ENCODE measurements at regions of chr14 and their contacts with region 1.

Region 1: GRCh38 chr14:68816262-68816942 is 23.5 kb upstream of the ZFP36L1 start:
- DNase-seq: peak; percentile 84 to 88 (median 86)
- H3K4me3 ChIP-seq: peak overlapping the region; percentile 32 to 44
- H3K4me3 Mint-ChIP-seq: peak overlapping the region; percentile 82 to 93 (median 86)
- H3K27ac ChIP-seq: peak overlapping the region; percentile 81
- H3K27ac Mint-ChIP-seq: peak overlapping the region; percentile 95 to 98 (median 95)
- H3K4me1 ChIP-seq: peaks cover 88% of the 10 kb centered on the region
- H3K4me1 Mint-ChIP-seq: peaks cover 50 to 86% (median 67%) of the 10 kb centered on the region in 4 donors
- H3K27me3 ChIP-seq: no peaks in the 10 kb centered on the region
- H3K27me3 Mint-ChIP-seq: no peaks in the 10 kb centered on the region

Region 2: GRCh38 chr14:67883717-67884116 is 932.7 kb before region 1 on chr14:
- CTCF ChIA-PET with region 1: interaction called, 3 read pairs
- POLR2A ChIA-PET with region 1: interaction called, 3 read pairs
- intact Hi-C with region 1: loop called (anchors 5 kb)
- DNase-seq: peak in 3 of 5 donors; percentile 6 to 11 (median 6)
- H3K4me3 ChIP-seq: no peak overlapping the region
- H3K4me3 Mint-ChIP-seq: no peak overlapping the region
- H3K27ac ChIP-seq: no peak overlapping the region
- H3K27ac Mint-ChIP-seq: no peak overlapping the region
- H3K4me1 ChIP-seq: no peaks in the 10 kb centered on the region
- H3K4me1 Mint-ChIP-seq: peaks cover 0 to 13% (median 10%) of the 10 kb centered on the region in 4 donors
- H3K27me3 ChIP-seq: no peaks in the 10 kb centered on the region
- H3K27me3 Mint-ChIP-seq: no peaks in the 10 kb centered on the region

Region 3: GRCh38 chr14:68261092-68261842 is 555.1 kb before region 1 on chr14:
- CTCF ChIA-PET with region 1: interaction called, 428 read pairs
- POLR2A ChIA-PET with region 1: interaction called, 11 read pairs
- intact Hi-C with region 1: no loop called
- DNase-seq: no peak
- H3K4me3 ChIP-seq: peak overlapping the region in 1 of 2 donors; percentile 10
- H3K4me3 Mint-ChIP-seq: peak overlapping the region; percentile 46 to 82 (median 64)
- H3K27ac ChIP-seq: peak overlapping the region; percentile 37
- H3K27ac Mint-ChIP-seq: peak overlapping the region; percentile 87 to 96 (median 93)
- H3K4me1 ChIP-seq: peaks cover 49% of the 10 kb centered on the region
- H3K4me1 Mint-ChIP-seq: peaks cover 26 to 57% (median 46%) of the 10 kb centered on the region in 4 donors
- H3K27me3 ChIP-seq: no peaks in the 10 kb centered on the region
- H3K27me3 Mint-ChIP-seq: no peaks in the 10 kb centered on the region

Region 4: DNA sequence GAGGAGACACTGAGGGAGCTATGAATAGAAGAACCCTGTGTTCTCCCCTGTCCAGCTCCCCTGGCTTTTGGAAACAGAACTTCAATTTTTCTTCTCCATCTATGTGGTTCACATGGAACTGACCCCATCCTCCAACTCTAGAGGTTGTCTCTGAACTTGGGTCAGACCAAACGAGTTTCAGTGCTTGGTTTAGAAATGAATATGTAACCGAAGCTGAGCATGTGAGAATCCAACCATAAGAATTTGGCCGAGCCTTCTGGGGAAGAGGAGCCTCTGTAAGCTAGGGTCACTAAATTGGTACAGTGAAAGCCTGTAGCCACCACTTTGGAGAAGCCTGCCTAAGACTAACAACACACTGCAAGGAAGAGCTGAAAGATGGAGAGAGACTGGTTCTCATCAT is 487.9 kb before region 1 on chr14:
- CTCF ChIA-PET with region 1: no interaction called
- POLR2A ChIA-PET with region 1: no interaction called
- intact Hi-C with region 1: no loop called
- DNase-seq: no peak
- H3K4me3 ChIP-seq: no peak overlapping the region
- H3K4me3 Mint-ChIP-seq: no peak overlapping the region
- H3K27ac ChIP-seq: no peak overlapping the region
- H3K27ac Mint-ChIP-seq: no peak overlapping the region
- H3K4me1 ChIP-seq: no peaks in the 10 kb centered on the region
- H3K4me1 Mint-ChIP-seq: peaks cover 0 to 1% (median 0%) of the 10 kb centered on the region in 4 donors
- H3K27me3 ChIP-seq: no peaks in the 10 kb centered on the region
- H3K27me3 Mint-ChIP-seq: no peaks in the 10 kb centered on the region

Region 5: GRCh38 chr14:68408680-68409079 is 407.7 kb before region 1 on chr14:
- CTCF ChIA-PET with region 1: interaction called, 13 read pairs
- POLR2A ChIA-PET with region 1: interaction called, 5 read pairs
- intact Hi-C with region 1: no loop called
- DNase-seq: peak in 4 of 5 donors; percentile 7 to 28 (median 18)
- H3K4me3 ChIP-seq: no peak overlapping the region
- H3K4me3 Mint-ChIP-seq: peak overlapping the region in 2 of 8 donors; percentile 9 to 14
- H3K27ac ChIP-seq: no peak overlapping the region
- H3K27ac Mint-ChIP-seq: peak overlapping the region in 1 of 7 donors; percentile 10
- H3K4me1 ChIP-seq: peaks cover 26% of the 10 kb centered on the region
- H3K4me1 Mint-ChIP-seq: peaks cover 27 to 39% (median 31%) of the 10 kb centered on the region in 4 donors
- H3K27me3 ChIP-seq: no peaks in the 10 kb centered on the region
- H3K27me3 Mint-ChIP-seq: no peaks in the 10 kb centered on the region

Region 6: DNA sequence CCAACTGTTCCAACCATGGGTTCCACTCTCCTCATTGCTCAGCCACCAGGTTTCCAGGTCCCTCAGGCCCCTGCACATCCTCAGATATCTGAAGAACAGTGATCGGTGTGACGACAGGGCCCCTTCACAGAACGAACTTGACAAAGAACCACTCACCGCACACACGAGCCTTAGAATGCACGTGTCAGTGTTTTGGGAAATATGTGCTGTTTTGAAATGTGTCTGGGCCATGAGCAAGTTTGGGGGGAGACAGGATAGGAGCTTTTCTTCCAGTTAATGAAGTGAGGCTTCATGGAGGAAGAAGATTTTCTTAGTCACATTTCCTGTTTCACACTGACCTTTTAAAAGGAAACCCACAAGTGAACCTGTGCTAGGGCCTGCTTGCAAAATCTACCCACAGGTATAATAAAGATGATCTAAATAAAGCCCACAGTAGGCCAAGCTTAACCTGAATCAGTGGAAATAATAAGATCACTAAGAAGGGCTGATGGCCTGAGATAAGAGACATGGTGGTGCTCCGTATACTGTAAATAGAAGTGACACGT is 82.1 kb before region 1 on chr14:
- CTCF ChIA-PET with region 1: no interaction called
- POLR2A ChIA-PET with region 1: interaction called, 12 read pairs
- intact Hi-C with region 1: no loop called
- DNase-seq: peak; percentile 21 to 61 (median 30)
- H3K4me3 ChIP-seq: no peak overlapping the region
- H3K4me3 Mint-ChIP-seq: peak overlapping the region in 7 of 8 donors; percentile 15 to 52 (median 41)
- H3K27ac ChIP-seq: peak overlapping the region; percentile 32
- H3K27ac Mint-ChIP-seq: peak overlapping the region; percentile 9 to 93 (median 75)
- H3K4me1 ChIP-seq: peaks cover 29% of the 10 kb centered on the region
- H3K4me1 Mint-ChIP-seq: peaks cover 24 to 43% (median 34%) of the 10 kb centered on the region in 4 donors
- H3K27me3 ChIP-seq: no peaks in the 10 kb centered on the region
- H3K27me3 Mint-ChIP-seq: no peaks in the 10 kb centered on the region

Region 7: GRCh38 chr14:68795597-68796417 is 20.6 kb before region 1 on chr14:
- CTCF ChIA-PET with region 1: interaction called, 238 read pairs
- POLR2A ChIA-PET with region 1: interaction called, 1,973 read pairs
- intact Hi-C with region 1: loop called (anchors 1 kb)
- DNase-seq: peak; percentile 88 to 93 (median 89)
- H3K4me3 ChIP-seq: peak overlapping the region; percentile 88 to 98
- H3K4me3 Mint-ChIP-seq: peak overlapping the region; percentile 88 to 100 (median 94)
- H3K27ac ChIP-seq: peak overlapping the region; percentile 99
- H3K27ac Mint-ChIP-seq: peak overlapping the region; percentile 98 to 100 (median 99)
- H3K4me1 ChIP-seq: peaks cover 20% of the 10 kb centered on the region
- H3K4me1 Mint-ChIP-seq: peaks cover 22 to 71% (median 29%) of the 10 kb centered on the region in 4 donors
- H3K27me3 ChIP-seq: no peaks in the 10 kb centered on the region
- H3K27me3 Mint-ChIP-seq: peaks cover 0 to 8% of the 10 kb centered on the region in 2 donors

Region 8: GRCh38 chr14:69055999-69056788 is 239.8 kb after region 1 on chr14:
- CTCF ChIA-PET with region 1: no interaction called
- POLR2A ChIA-PET with region 1: no interaction called
- intact Hi-C with region 1: no loop called
- DNase-seq: peak in 2 of 5 donors; percentile 4 to 5
- H3K4me3 ChIP-seq: no peak overlapping the region
- H3K4me3 Mint-ChIP-seq: no peak overlapping the region
- H3K27ac ChIP-seq: no peak overlapping the region
- H3K27ac Mint-ChIP-seq: peak overlapping the region in 3 of 7 donors; percentile 10 to 42 (median 23)
- H3K4me1 ChIP-seq: no peaks in the 10 kb centered on the region
- H3K4me1 Mint-ChIP-seq: peaks cover 0 to 7% (median 3%) of the 10 kb centered on the region in 4 donors
- H3K27me3 ChIP-seq: no peaks in the 10 kb centered on the region
- H3K27me3 Mint-ChIP-seq: no peaks in the 10 kb centered on the region